Natural killer cell (primary cell): ENCODE measurements at regions of chr17 and their contacts with region 1.

Region 1: DNA sequence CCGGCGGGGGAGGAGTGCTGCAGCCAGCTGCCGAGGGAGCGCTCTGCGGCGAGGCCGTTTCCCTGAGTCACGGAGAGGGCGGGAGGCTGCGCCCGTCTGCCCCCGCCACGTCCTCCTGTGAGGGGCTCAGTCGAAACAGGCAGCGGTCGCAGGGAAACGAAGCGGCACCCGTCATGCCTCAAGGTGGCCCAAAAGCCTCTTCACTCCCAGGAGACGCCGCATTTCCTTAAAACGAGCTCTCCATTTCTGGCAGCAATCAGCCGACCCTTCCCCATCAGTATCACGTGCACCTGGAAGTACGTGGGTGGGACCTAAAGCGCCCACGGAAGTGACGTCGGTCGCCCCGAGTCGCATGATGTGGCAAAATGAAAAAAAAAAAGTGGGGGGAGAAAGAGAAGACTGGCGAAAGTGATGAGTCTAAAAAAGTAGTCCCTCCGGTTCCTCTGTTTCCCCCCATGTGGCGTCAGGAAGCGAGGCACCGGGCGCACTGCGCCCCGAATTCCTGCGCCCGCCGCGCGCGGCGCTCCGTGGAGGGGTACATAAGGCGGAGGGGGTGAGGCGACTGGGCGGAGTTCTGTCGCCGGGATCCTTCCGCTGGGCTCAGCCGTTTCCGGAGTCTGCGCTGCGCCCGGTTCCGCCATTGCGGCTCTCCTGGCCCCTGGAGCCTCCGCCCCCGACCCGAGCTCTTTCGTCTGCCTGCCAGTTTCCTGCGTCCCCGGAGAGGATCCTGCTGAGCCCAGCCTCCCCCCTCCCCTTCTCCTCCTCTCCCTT is at the start of gene CLTC:
- DNase-seq: peak; percentile 93 to 97
- ATAC-seq: peak; percentile 85 to 94 (median 87)
- H3K4me3 ChIP-seq: peak within 1 kb of the TSS; percentile 100
- H3K4me3 Mint-ChIP-seq: peak within 1 kb of the TSS; percentile 93
- H3K27ac ChIP-seq: peak within 1 kb of the TSS; percentile 98
- H3K27ac Mint-ChIP-seq: peak within 1 kb of the TSS; percentile 94 to 100
- H3K4me1 ChIP-seq: peaks cover 13% of the 10 kb centered on the region
- H3K4me1 Mint-ChIP-seq: peaks cover 45 to 52% of the 10 kb centered on the region in 2 donors
- H3K27me3 ChIP-seq: no peaks in the 10 kb centered on the region
- H3K27me3 Mint-ChIP-seq: no peaks in the 10 kb centered on the region
- CTCF ChIP-seq: no peak
- total RNA-seq, gene CLTC: 116 to 127 (median 117) TPM

Region 2: GRCh38 chr17:59565171-59565969 is 54.1 kb before region 1 on chr17 and contains the start of gene DHX40:
- intact Hi-C with region 1: loop called (anchors 1 kb)
- DNase-seq: peak; percentile 94 to 99
- ATAC-seq: peak; percentile 93 to 96 (median 96)
- H3K4me3 ChIP-seq: peak within 1 kb of the TSS; percentile 72
- H3K4me3 Mint-ChIP-seq: peak within 1 kb of the TSS; percentile 100
- H3K27ac ChIP-seq: peak within 1 kb of the TSS; percentile 72
- H3K27ac Mint-ChIP-seq: peak within 1 kb of the TSS; percentile 98 to 100
- H3K4me1 ChIP-seq: peaks cover 11% of the 10 kb centered on the region
- H3K4me1 Mint-ChIP-seq: peaks cover 21 to 24% of the 10 kb centered on the region in 2 donors
- H3K27me3 ChIP-seq: no peaks in the 10 kb centered on the region
- H3K27me3 Mint-ChIP-seq: no peaks in the 10 kb centered on the region
- CTCF ChIP-seq: no peak
- total RNA-seq, gene DHX40: 43.0 to 47.4 (median 46.6) TPM

Region 3: DNA sequence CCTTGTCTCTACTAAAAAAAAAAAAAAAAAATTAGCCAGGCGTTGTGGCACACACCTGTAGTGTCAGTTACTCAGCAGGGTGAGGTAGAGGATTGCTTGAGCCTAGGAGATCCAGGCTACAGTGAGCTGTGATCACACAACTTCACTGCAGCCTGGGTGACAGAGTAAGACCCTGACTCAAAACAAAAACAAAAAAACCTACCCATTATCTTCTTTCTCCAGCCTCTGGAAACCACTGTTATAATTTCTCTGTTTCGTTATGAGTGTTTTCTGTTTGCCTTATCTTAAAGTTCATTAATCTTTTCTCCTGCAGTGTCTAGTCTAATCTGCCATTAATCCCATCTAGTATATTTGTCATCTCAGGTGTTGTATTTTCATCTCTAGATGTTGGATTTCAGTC is 18.3 kb before region 1 on chr17:
- intact Hi-C with region 1: no loop called
- DNase-seq: no peak
- ATAC-seq: no peak
- H3K4me3 ChIP-seq: no peak overlapping the region
- H3K4me3 Mint-ChIP-seq: no peak overlapping the region
- H3K27ac ChIP-seq: no peak overlapping the region
- H3K27ac Mint-ChIP-seq: no peak overlapping the region
- H3K4me1 ChIP-seq: no peaks in the 10 kb centered on the region
- H3K4me1 Mint-ChIP-seq: no peaks in the 10 kb centered on the region
- H3K27me3 ChIP-seq: no peaks in the 10 kb centered on the region
- H3K27me3 Mint-ChIP-seq: no peaks in the 10 kb centered on the region
- CTCF ChIP-seq: no peak

Region 4: GRCh38 chr17:59641799-59642489 is 22.5 kb after region 1 on chr17:
- intact Hi-C with region 1: loop called (anchors 2 kb)
- DNase-seq: peak in 1 of 2 donors; percentile 58
- ATAC-seq: peak; percentile 69 to 79 (median 74)
- H3K4me3 ChIP-seq: no peak overlapping the region
- H3K4me3 Mint-ChIP-seq: peak overlapping the region; percentile 64
- H3K27ac ChIP-seq: peak overlapping the region; percentile 32
- H3K27ac Mint-ChIP-seq: peak overlapping the region; percentile 65 to 71
- H3K4me1 ChIP-seq: peaks cover 16% of the 10 kb centered on the region
- H3K4me1 Mint-ChIP-seq: peaks cover 44 to 55% of the 10 kb centered on the region in 2 donors
- H3K27me3 ChIP-seq: no peaks in the 10 kb centered on the region
- H3K27me3 Mint-ChIP-seq: no peaks in the 10 kb centered on the region
- CTCF ChIP-seq: no peak

Region 5: DNA sequence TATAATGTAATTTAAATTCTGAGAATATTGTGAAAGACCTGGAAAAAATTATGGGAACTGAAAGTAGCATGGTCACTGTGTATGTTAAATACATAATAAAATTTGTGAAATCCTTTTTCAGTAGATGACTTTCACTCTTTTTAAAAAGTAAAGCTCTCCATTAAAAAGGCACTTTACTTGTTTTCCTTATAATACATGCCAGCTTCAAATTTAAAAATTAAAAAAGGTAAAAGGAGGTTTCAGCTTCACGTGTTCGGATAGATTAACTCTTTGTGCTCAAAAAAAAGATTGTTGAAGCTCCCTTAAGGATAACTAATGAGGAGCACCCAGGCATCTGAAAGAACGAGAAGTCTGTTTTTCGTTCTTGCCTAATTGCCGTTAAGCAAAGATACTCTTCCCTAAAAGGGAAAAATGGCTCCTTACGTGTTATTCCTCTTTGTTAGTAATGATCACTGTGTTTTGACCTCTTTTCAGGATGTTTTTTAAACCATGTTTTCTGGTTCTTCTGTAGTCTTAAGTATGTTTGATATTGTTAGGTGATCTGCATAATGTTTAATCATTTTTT is 185.5 kb after region 1 on chr17:
- intact Hi-C with region 1: no loop called
- DNase-seq: no peak
- ATAC-seq: no peak
- H3K4me3 ChIP-seq: no peak overlapping the region
- H3K4me3 Mint-ChIP-seq: no peak overlapping the region
- H3K27ac ChIP-seq: peak overlapping the region; percentile 64
- H3K27ac Mint-ChIP-seq: no peak overlapping the region
- H3K4me1 ChIP-seq: peaks cover 2% of the 10 kb centered on the region
- H3K4me1 Mint-ChIP-seq: no peaks in the 10 kb centered on the region
- H3K27me3 ChIP-seq: no peaks in the 10 kb centered on the region
- H3K27me3 Mint-ChIP-seq: no peaks in the 10 kb centered on the region
- CTCF ChIP-seq: no peak

Region 6: DNA sequence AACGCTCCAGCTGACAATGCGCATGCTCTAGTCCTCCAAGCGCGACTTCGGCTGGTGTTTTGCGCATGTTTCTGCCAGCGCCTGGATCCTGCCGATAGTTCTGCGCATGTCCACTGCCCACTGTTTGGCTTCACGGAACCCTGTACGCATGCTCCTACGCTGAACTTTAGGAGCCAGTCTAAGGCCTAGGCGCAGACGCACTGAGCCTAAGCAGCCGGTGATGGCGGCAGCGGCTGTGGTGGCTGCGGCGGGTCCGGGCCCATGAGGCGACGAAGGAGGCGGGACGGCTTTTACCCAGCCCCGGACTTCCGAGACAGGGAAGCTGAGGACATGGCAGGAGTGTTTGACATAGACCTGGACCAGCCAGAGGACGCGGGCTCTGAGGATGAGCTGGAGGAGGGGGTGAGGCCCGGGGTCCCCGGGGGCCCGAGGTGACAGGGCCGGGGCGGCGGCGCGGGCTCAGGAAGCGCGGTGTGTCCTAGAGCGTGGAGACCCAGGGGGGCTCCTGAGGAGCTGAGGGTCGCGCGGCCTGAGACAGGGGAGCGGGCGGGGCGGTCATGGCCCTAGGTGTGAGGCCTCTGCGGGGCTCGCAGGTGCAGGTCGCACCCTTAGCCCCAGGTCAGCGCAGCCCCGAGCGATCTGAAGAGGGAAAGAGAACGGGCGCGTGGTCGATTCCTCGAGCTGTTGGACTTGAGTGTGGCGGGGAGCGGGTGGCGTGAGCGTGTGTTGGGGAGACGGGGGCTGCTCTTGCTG is 273.6 kb after region 1 on chr17 and contains the starts of genes RPS6KB1 and TUBD1:
- intact Hi-C with region 1: loop called (anchors 2 kb)
- DNase-seq: peak; percentile 94 to 100
- ATAC-seq: peak; percentile 89 to 97 (median 93)
- H3K4me3 ChIP-seq: peak within 1 kb of the TSS; percentile 90
- H3K4me3 Mint-ChIP-seq: peak within 1 kb of the TSS; percentile 100
- H3K27ac ChIP-seq: peak within 1 kb of the TSS; percentile 94
- H3K27ac Mint-ChIP-seq: peak within 1 kb of the TSS; percentile 96 to 99
- H3K4me1 ChIP-seq: peaks cover 24% of the 10 kb centered on the region
- H3K4me1 Mint-ChIP-seq: peaks cover 40 to 52% of the 10 kb centered on the region in 2 donors
- H3K27me3 ChIP-seq: no peaks in the 10 kb centered on the region
- H3K27me3 Mint-ChIP-seq: no peaks in the 10 kb centered on the region
- CTCF ChIP-seq: no peak
- total RNA-seq, gene RPS6KB1: 70.6 to 85.0 (median 78.2) TPM
- total RNA-seq, gene TUBD1: 8.4 to 9.0 (median 8.4) TPM